ENCODE measurements at regions of chr14 and their contacts with region 1.

Region 1: DNA sequence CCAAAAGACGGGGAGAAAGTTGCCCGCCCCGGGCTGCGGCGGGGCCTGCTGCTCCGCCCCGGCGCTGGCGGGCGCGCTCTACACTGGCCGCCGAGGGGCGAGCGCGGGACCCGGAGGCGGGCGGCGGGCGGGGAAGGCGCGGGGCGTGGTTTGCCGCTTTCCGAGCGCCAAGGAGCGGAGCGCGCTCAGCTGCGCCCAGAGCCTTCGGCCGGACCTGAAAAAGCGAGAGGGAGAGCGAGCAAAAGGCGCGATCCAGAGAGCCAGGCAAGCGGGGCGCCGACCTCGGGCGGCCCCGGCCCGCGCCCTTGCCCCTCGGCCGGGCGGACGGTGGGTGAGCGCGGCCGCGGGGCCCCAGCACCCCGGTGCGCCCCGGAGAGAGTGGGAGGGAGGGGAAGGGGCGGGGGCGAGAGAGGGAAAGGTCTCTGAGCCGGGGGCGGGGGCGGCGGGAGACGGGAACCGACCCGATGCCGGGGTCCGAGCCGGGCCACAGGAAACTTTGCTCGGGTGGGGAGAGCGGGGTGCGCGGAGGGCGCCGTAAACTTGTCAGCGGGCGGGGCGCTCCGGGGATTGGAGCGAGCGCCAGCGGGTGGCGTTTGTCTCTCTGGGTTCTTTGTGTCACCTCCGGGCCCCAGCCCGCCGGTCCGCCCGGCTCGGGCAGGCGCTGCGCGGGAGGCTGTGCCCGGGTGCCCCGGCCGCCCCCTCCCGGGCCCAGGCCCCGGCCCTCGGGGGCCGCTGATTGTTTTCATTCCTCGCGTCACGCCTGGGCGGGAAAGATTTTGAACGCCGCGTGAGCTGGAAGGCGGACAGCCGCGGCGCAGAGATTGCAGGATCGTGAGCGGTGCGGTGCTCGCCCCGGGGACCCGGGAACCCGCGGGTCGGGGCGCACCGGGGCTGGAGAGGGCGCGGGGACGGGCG is at the start of gene SYNE2:
- DNase-seq: peak; percentile 78 to 85 (median 82)
- H3K4me3 ChIP-seq: peak within 1 kb of the TSS; percentile 68 to 72
- H3K4me3 Mint-ChIP-seq: peak within 1 kb of the TSS; percentile 97 to 99 (median 99)
- H3K27ac ChIP-seq: peak within 1 kb of the TSS; percentile 79
- H3K27ac Mint-ChIP-seq: peak within 1 kb of the TSS; percentile 93 to 98 (median 97)
- H3K4me1 ChIP-seq: peaks cover 42% of the 10 kb centered on the region
- H3K4me1 Mint-ChIP-seq: peaks cover 29 to 47% (median 38%) of the 10 kb centered on the region in 4 donors
- H3K27me3 ChIP-seq: no peaks in the 10 kb centered on the region
- H3K27me3 Mint-ChIP-seq: peaks cover 0 to 3% of the 10 kb centered on the region in 2 donors
- total RNA-seq, gene SYNE2: 259 to 280 TPM

Region 2: DNA sequence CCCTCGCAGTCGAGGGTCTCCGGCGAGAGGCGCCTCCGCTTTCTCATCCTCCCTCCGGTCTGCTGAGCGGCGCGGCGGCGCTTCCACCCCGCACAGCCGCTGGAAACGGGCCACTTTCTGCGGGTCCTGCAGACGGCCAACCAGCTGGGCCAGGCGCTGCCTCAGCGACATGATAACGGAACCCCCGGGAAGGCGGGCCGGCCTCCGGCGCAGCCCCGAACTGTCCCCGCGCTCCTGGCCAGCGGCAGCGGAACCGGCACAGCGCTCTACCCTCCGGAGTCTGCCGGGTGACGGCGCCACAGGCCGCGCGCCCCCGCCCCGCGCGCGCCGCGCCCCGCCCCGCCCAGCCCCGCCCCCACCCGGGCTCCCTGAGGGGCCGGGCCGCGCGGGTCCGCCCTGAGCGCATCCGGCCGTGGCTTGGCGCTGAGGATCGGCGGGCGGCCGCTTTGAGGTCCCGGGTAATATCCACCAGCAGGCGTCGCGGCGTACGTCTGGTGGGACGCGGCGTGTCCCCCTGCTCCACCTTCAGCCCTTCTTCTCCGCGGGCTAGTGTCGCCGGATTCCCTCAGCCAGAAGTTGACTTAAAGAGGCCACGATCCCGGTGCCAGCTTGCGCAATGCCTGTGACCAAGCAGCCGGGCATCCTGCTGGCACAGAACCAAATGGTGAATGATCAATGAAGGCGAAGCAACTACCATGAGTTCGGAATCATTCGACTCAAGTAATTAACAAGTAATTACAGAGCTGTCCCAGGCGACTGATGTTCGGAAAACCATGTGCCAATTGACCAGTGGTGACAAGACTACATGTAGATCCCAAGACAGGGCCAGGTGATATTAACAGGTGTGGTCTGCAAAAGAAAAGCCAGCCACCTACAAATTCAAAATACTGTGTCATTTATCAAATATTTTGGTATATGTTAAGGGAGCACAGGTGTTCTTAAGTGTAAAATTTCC is 125.0 kb before region 1 on chr14 and contains the start of gene SGPP1:
- CTCF ChIA-PET with region 1: no interaction called
- POLR2A ChIA-PET with region 1: no interaction called
- intact Hi-C with region 1: loop called (anchors 5 kb)
- DNase-seq: peak; percentile 81 to 86 (median 83)
- H3K4me3 ChIP-seq: peak within 1 kb of the TSS; percentile 57 to 80
- H3K4me3 Mint-ChIP-seq: peak within 1 kb of the TSS; percentile 98 to 100 (median 99)
- H3K27ac ChIP-seq: peak within 1 kb of the TSS; percentile 68
- H3K27ac Mint-ChIP-seq: peak within 1 kb of the TSS; percentile 86 to 98 (median 97)
- H3K4me1 ChIP-seq: peaks cover 31% of the 10 kb centered on the region
- H3K4me1 Mint-ChIP-seq: peaks cover 25 to 53% (median 43%) of the 10 kb centered on the region in 4 donors
- H3K27me3 ChIP-seq: no peaks in the 10 kb centered on the region
- H3K27me3 Mint-ChIP-seq: no peaks in the 10 kb centered on the region
- total RNA-seq, gene SGPP1: 12.2 to 12.4 TPM

Region 3: DNA sequence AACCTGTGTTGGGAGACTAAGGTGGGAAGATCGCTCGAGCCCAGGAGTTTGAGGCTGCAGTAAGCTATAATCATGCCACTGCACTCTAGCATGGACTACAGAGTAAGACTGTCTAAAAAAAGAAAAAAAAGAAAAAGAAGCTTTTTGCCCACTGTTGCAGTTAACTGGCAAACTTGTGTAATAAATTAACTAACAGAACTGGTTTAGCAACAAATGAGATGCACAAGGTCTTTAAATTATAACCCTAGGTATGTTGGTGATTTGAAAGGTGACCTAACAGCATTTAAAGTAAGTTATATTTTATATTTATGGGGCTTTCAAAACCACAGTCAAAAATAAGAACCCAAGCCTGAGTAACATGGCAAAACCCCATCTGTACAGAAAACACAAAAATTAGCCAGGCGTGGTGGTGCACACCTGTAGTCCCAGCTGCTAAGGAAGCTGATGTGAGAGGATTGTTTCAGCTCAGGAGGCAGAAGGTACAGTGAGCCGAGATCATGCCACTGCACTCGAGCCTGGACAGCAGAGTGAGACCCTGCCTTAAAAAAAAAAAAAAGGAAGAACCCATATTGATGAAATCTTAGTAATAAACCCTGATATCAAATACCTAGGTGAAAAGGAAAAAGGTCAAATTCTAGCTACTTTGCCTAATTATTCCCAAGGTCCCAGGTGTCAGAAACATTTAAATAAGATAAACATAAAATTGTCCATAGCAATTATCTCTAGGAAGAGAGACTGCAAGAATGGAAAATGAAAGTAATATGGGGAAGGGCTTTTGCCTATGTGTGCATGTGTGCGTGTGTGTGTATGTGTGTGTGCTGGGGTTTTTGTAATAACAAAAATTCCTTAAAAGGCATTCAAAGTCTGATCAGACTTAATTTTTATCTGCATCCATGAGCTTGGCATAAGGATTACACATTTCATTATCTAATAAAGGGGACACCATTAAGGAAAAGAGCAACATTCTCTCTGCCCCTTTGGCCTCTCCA is 15.2 kb after region 1 on chr14:
- CTCF ChIA-PET with region 1: interaction called, 20 read pairs
- POLR2A ChIA-PET with region 1: interaction called, 202 read pairs
- intact Hi-C with region 1: loop called (anchors 1 kb)
- DNase-seq: peak; percentile 46 to 69 (median 52)
- H3K4me3 ChIP-seq: peak overlapping the region in 1 of 2 donors; percentile 12
- H3K4me3 Mint-ChIP-seq: peak overlapping the region; percentile 62 to 90 (median 78)
- H3K27ac ChIP-seq: peak overlapping the region; percentile 70
- H3K27ac Mint-ChIP-seq: peak overlapping the region; percentile 94 to 98 (median 95)
- H3K4me1 ChIP-seq: peaks cover 83% of the 10 kb centered on the region
- H3K4me1 Mint-ChIP-seq: peaks cover 47 to 84% (median 62%) of the 10 kb centered on the region in 4 donors
- H3K27me3 ChIP-seq: no peaks in the 10 kb centered on the region
- H3K27me3 Mint-ChIP-seq: no peaks in the 10 kb centered on the region

Region 4: DNA sequence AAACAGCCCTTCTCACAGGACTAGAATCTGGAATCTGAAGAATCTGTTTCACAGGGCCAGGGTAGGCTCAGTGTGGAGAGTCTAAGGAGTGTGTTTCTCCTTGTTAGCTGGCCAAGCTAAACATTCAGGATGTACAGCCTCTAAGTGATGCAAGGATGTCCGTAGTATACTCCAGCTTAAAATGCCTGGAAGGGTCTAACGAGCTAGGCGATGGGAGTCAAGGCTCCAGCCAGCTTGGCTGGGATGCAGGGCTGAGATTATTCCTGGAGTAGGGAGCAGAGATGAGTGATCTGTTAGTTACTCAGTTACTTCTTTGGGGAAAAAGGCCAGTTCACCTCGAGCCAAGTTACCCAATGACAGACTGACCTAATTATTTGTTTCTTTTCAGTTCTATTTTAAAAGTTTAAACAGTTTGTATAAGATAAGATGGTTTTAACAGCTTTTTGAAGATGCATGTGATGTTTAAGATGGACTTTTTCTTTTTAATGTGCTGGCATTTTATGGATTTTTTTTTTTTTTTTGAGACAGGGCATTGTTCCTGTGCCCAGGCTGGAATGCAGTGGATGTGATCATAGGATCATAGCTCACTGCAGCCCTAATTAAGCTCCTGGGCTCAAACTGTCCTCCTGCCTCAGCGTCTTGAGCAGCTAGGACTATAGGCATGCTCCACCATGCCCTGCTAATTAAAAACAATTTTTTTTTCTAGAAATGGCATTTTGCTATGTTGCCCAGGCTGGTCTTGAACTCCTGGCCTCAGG is 40.8 kb after region 1 on chr14:
- CTCF ChIA-PET with region 1: interaction called, 3 read pairs
- POLR2A ChIA-PET with region 1: interaction called, 13 read pairs
- intact Hi-C with region 1: loop called (anchors 5 kb)
- DNase-seq: no peak
- H3K4me3 ChIP-seq: no peak overlapping the region
- H3K4me3 Mint-ChIP-seq: no peak overlapping the region
- H3K27ac ChIP-seq: no peak overlapping the region
- H3K27ac Mint-ChIP-seq: peak overlapping the region in 6 of 7 donors; percentile 39 to 78 (median 65)
- H3K4me1 ChIP-seq: peaks cover 28% of the 10 kb centered on the region
- H3K4me1 Mint-ChIP-seq: peaks cover 28 to 69% (median 52%) of the 10 kb centered on the region in 4 donors
- H3K27me3 ChIP-seq: no peaks in the 10 kb centered on the region
- H3K27me3 Mint-ChIP-seq: no peaks in the 10 kb centered on the region

Region 5: DNA sequence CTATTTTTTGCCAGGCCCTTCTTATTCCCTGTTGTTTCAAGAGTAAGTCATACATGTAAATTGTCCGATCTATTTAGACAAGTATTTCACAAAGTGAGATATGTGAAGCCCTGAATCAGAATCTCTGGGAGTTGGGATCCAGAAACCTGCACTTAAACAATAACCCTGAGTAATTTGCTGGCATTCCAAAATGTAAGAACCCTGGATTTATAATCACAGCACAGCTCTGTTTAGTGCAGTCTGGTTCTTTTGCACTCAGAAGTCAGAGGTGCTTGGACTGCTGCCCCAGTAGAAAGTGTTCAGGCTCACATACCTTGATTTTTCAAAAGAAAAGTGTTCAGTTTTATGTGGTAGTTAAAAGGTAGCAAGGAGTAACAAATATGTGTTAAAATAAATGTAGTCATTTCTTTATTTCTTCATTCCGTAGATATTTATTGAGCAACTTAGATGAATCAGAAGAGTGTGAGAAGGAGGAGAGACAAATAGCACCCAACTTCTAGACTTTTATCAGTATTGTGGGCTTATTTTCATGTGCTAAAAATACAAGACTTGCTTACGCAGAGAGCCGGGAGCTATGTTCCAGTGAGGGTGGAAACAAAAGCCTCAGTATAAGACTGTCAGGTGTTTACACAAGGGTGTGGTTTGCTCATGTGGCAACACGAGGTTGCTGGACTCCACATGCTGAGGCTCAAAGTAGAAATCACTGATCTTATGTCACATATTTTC is 69.8 kb after region 1 on chr14:
- CTCF ChIA-PET with region 1: interaction called, 10 read pairs
- POLR2A ChIA-PET with region 1: interaction called, 3 read pairs
- intact Hi-C with region 1: no loop called
- DNase-seq: no peak
- H3K4me3 ChIP-seq: no peak overlapping the region
- H3K4me3 Mint-ChIP-seq: peak overlapping the region in 4 of 8 donors; percentile 1 to 47 (median 20)
- H3K27ac ChIP-seq: no peak overlapping the region
- H3K27ac Mint-ChIP-seq: peak overlapping the region; percentile 3 to 75 (median 37)
- H3K4me1 ChIP-seq: peaks cover 18% of the 10 kb centered on the region
- H3K4me1 Mint-ChIP-seq: peaks cover 16 to 40% (median 25%) of the 10 kb centered on the region in 4 donors
- H3K27me3 ChIP-seq: no peaks in the 10 kb centered on the region
- H3K27me3 Mint-ChIP-seq: no peaks in the 10 kb centered on the region

Region 6: GRCh38 chr14:63956326-63956725 is 103.3 kb after region 1 on chr14:
- CTCF ChIA-PET with region 1: interaction called, 5 read pairs
- POLR2A ChIA-PET with region 1: interaction called, 10 read pairs
- intact Hi-C with region 1: no loop called
- DNase-seq: no peak
- H3K4me3 ChIP-seq: no peak overlapping the region
- H3K4me3 Mint-ChIP-seq: no peak overlapping the region
- H3K27ac ChIP-seq: no peak overlapping the region
- H3K27ac Mint-ChIP-seq: no peak overlapping the region
- H3K4me1 ChIP-seq: no peaks in the 10 kb centered on the region
- H3K4me1 Mint-ChIP-seq: peaks cover 6 to 16% (median 12%) of the 10 kb centered on the region in 4 donors
- H3K27me3 ChIP-seq: no peaks in the 10 kb centered on the region
- H3K27me3 Mint-ChIP-seq: no peaks in the 10 kb centered on the region

Region 7: GRCh38 chr14:64040044-64040443 is 187.0 kb after region 1 on chr14:
- CTCF ChIA-PET with region 1: no interaction called
- POLR2A ChIA-PET with region 1: no interaction called
- intact Hi-C with region 1: no loop called
- DNase-seq: no peak
- H3K4me3 ChIP-seq: no peak overlapping the region
- H3K4me3 Mint-ChIP-seq: no peak overlapping the region
- H3K27ac ChIP-seq: no peak overlapping the region
- H3K27ac Mint-ChIP-seq: no peak overlapping the region
- H3K4me1 ChIP-seq: no peaks in the 10 kb centered on the region
- H3K4me1 Mint-ChIP-seq: peaks cover 0 to 15% (median 9%) of the 10 kb centered on the region in 4 donors
- H3K27me3 ChIP-seq: no peaks in the 10 kb centered on the region
- H3K27me3 Mint-ChIP-seq: no peaks in the 10 kb centered on the region

Region 8: DNA sequence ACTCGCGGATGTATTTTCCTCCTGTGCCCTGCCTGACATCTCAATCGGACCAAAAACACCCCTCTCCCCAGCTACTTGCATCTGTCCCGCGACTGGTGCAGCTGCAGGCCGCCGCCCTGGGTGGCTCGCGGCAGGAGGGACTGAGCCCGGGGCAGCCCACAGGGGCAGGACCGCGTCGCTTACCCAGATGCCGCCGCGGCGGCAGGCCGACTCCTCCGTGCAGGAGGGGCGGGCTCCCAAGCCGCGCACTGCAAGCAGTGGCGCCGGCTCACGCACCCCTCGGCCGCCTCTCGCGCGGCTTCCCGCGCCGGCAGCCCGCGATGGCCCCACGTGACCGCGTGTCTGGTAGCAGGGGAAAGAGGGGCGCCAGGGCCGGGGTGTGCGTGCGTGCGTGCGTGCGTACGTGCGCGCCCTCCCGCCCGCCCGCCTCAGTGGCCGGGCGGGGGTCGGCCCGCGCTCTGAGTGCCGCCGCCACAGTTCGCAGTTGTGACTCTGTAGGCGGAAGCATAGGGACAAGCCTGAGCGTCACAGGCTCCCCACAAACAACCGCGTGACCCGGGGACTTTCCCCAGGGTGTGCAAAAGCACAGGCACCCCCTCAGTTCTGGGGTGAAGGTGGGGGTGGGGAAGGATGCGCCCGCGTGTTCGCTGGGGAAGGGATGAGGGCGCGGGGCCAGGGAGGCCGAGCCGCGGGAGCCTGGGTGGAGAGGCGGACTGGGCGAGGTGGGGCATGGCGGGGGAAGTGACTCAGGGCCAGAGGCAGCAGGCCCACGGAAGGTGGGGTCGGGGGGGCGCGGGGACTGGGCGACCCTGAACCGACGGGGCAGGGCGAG is 650.6 kb after region 1 on chr14 and contains the start of gene ZBTB25:
- CTCF ChIA-PET with region 1: no interaction called
- POLR2A ChIA-PET with region 1: no interaction called
- intact Hi-C with region 1: loop called (anchors 2 kb)
- DNase-seq: peak; percentile 97 to 100 (median 98)
- H3K4me3 ChIP-seq: peak within 1 kb of the TSS; percentile 78 to 87
- H3K4me3 Mint-ChIP-seq: peak within 1 kb of the TSS; percentile 96 to 100 (median 98)
- H3K27ac ChIP-seq: peak within 1 kb of the TSS; percentile 100
- H3K27ac Mint-ChIP-seq: peak within 1 kb of the TSS; percentile 99 to 100 (median 100)
- H3K4me1 ChIP-seq: peaks cover 59% of the 10 kb centered on the region
- H3K4me1 Mint-ChIP-seq: peaks cover 33 to 84% (median 42%) of the 10 kb centered on the region in 4 donors
- H3K27me3 ChIP-seq: no peaks in the 10 kb centered on the region
- H3K27me3 Mint-ChIP-seq: peaks cover 0 to 2% of the 10 kb centered on the region in 2 donors
- total RNA-seq, gene ZBTB25: 84.1 to 87.5 TPM